Head of caudate nucleus (tissue), 42 donors: ENCODE measurements at regions of chr15 and their contacts with region 1.

Region 1: GRCh38 chr15:43302205-43302817 is 28.1 kb downstream of the LCMT2 start:
- DNase-seq: no peak

Region 2: DNA sequence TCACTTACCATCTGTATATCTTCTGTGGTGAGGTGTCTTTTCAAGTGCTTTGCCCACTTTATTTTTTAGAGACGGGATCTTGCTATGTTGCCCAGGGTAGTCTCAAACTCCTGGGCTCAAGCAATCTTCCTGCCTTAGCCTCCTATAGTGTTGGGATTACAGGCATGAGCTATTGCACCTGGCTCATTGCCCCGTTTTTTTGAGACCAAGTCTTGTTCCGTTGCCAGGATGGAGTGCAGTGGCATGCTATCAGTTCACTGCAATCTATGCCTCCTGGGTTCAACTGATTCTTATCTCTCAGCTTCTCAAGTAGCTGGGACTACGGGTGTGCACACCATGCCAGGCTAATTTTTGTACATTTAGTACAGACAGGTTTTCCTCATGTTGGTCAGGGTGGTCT is 329.2 kb before region 1 on chr15:
- intact Hi-C with region 1: no loop called
- DNase-seq: no peak

Region 3: GRCh38 chr15:43723151-43723550 is 420.8 kb after region 1 on chr15:
- intact Hi-C with region 1: loop called (anchors 10 kb)
- DNase-seq: no peak